ENCODE measurements at regions of chr18 and their contacts with region 1.

Region 1: DNA sequence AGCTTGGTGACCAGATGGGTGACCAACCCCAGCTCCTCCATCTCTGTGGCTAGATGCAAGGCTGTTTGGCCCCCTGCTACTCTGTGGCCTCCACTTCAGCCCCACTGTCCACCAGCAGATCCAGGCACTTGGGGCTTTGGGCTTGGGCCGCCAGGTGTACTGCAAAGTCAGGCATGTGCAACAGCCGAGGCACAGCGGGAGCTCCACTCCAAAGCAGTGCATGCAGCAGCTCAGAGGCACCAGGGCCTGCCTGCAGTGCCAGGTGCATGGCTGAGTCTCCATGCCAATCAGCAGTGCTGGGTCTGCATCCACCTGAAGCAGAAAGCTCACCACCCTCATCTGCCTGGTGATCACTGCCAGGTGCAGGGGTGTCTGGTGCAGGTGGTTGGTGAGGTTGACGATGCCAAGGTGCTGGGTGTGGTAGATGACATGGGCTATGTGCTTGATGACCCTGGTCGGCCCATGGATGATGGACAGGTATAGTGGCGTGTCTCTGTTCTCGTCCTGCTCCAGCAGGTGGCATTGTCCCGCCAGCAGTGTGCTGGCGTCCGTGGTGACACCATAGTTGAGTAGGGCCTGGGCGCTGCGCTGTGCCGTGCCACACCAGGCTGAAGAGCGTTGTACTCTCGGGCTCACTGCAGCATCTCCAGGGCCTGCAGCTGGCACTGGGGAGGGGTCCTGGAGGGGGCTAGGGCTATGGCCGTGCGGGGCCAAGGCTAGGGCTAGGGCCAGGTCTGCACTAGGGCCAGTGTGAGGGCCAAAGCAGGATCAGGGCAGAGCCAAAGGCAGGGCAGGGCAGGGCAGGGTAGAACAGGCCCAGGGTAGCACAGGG is 1.0 kb upstream of the ANKRD62 start:
- DNase-seq: peak; percentile 63
- H3K4me3 ChIP-seq: no peak overlapping the region
- H3K27ac ChIP-seq: no peak overlapping the region
- H3K4me1 ChIP-seq: no peaks in the 10 kb centered on the region
- H3K27me3 ChIP-seq: no peaks in the 10 kb centered on the region
- CTCF ChIP-seq: peak; percentile 52

Region 2: DNA sequence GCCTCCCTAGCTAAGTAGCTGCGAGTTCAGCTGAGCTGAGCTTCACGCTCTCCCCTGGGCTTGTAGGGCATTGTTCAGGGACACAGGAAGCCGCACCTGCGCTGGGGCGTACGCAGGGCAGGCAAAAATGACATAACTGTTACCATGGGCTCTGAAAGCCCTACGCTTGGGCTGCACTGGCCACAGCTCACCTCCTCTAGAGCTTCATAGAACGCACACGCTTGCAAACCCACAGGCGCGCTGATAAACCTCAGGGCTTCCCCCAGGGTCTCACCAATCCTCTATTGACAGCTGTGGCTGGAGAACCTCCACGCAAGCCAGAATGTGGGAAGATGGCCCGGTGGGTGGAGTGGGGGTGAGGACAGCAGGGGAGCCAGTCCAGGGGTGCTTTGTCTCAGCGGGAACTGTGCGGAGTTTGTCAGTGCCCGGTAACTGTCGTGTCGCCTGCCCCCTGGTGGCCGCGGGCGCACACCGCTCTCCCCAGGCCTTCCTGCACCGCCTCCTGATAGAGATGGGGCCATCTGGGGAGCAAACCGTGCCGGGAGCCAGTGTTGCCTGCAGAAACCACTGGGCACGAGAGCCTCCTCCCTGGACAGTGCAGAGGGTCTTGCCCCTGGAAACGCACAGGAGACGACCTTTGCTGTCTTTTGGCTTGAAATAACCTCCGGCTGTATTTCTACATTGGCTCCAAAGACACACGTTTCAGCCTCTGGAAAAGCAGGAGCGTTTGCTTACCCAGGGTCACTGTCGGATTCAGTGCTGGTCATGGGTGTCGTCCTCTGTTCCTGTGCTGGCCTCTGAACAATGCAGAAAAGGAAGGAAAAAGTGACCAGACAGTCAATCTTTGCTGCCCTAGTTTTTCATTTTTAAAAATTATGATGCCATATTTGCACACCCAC is 144.6 kb after region 1 on chr18:
- intact Hi-C with region 1: loop called (anchors 2 kb)
- DNase-seq: peak; percentile 75
- H3K4me3 ChIP-seq: no peak overlapping the region
- H3K27ac ChIP-seq: no peak overlapping the region
- H3K4me1 ChIP-seq: no peaks in the 10 kb centered on the region
- H3K27me3 ChIP-seq: no peaks in the 10 kb centered on the region
- CTCF ChIP-seq: peak; percentile 82